HepG2 (cell line): ENCODE measurements at regions of chr20 and their contacts with region 1.

Region 1: GRCh38 chr20:51385646-51386530 is 156.6 kb downstream of the NFATC2 start:
- DNase-seq: peak; percentile 53
- ATAC-seq: peak; percentile 80
- H3K4me3 ChIP-seq: no peak overlapping the region
- H3K27ac ChIP-seq: no peak overlapping the region
- H3K4me1 ChIP-seq: no peaks in the 10 kb centered on the region
- H3K27me3 ChIP-seq: no peaks in the 10 kb centered on the region
- CTCF ChIP-seq: peak; percentile 68
- EP300 ChIP-seq: no peak
- POLR2A ChIP-seq: no peak
- RAD21 ChIP-seq: peak; percentile 83

Region 2: DNA sequence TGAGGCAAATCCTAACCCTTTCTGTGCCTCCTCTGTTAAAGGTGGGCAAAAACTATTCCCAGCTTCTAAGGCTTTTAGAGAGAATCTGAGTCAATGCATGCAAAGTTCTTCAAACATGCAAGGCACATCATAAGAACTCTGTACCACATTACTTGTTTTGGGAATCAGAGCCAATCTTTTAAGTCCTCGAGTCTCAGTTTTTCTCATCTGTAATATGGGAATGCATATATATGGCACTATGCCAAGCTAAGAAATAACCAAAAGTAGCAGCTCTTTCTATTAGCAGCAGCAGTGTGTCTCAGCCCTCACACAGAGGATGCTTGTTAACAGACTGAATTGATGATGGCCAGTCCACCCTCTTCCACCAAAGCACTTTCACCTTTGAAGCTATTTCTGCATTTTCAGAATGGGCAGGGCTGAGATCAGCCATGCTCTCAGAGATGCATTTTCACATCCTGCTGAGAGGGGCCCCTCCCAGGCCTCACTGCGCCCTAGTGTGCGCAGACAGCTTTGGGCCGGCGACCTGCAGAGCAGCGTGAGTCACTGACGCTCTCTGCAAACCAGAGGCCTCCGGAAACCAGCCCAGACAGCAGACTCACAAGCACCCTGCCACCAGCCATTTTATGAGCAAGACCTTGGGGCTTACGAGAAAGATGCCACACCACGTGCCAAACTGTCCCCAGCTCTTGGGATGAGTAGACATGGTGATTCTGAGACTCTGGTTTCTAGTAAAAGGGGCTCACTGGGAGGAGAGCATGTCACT is 18.6 kb after region 1 on chr20:
- CTCF ChIA-PET with region 1: no interaction called
- POLR2A ChIA-PET with region 1: no interaction called
- in situ Hi-C with region 1: no loop called
- intact Hi-C with region 1: no loop called
- DNase-seq: no peak
- ATAC-seq: no peak
- H3K4me3 ChIP-seq: no peak overlapping the region
- H3K27ac ChIP-seq: no peak overlapping the region
- H3K4me1 ChIP-seq: no peaks in the 10 kb centered on the region
- H3K27me3 ChIP-seq: no peaks in the 10 kb centered on the region
- CTCF ChIP-seq: no peak
- EP300 ChIP-seq: no peak
- POLR2A ChIP-seq: no peak
- RAD21 ChIP-seq: no peak

Region 3: DNA sequence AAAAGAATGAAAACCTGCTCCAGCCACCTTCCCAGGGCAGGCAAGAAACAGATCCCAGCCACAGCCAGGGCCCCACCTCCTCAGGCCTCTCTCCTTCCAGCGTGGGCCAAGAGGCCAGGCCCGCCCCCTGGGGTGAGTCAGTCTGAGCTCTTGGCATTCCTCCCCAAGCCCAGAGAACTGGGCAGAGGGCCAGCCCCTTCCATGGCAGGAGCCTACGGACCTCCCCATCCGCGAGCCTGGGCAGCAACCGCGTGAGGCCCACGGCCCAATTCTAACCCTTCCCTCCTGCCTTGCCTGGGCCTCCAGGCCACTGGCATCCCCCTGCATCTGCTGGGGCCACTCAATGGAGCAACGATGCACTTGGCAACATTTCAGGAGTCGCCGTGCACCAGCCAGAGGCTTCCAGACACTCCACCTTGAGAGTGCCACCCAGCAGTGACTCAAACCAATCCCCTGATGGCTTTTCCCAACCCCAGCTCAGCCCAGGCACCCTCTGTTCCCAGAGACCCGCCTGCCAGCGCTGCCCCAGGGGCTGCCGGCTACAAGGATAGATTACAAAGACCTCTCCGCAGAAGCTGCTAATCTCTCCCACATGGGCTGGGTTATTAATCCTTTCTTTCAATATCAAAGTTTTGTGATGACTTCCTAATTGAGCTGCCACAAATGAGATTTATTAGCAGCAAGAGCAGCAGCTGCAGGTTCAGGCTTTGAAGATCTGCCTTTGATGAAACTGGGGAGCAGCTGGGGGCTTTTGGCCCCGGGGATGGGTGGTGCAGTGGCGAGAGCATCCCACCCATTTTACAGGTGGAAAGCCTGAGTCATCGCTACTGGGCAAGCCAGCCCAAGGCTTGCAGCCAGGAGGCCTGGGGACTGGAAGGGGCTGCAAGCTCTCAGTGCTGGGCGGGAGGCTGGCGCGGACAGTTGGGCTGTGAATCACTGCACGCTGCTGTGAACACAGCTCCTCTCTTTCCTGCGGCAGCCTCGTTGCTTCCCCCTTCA is 70.9 kb after region 1 on chr20:
- CTCF ChIA-PET with region 1: no interaction called
- POLR2A ChIA-PET with region 1: no interaction called
- in situ Hi-C with region 1: no loop called
- intact Hi-C with region 1: loop called (anchors 10 kb)
- DNase-seq: peak; percentile 78
- ATAC-seq: peak; percentile 92
- H3K4me3 ChIP-seq: peak overlapping the region in 1 of 3 experiments; percentile 23; a peak in 2 of 6 replicates
- H3K27ac ChIP-seq: no peak overlapping the region
- H3K4me1 ChIP-seq: peaks cover 10% of the 10 kb centered on the region
- H3K27me3 ChIP-seq: no peaks in the 10 kb centered on the region
- CTCF ChIP-seq: no peak
- EP300 ChIP-seq: no peak
- POLR2A ChIP-seq: no peak
- RAD21 ChIP-seq: no peak

Region 4: GRCh38 chr20:51595058-51595532 is 209.2 kb after region 1 on chr20:
- CTCF ChIA-PET with region 1: interaction called, 25 read pairs
- POLR2A ChIA-PET with region 1: no interaction called
- in situ Hi-C with region 1: no loop called
- intact Hi-C with region 1: loop called (anchors 1 kb)
- DNase-seq: peak; percentile 88
- ATAC-seq: peak; percentile 98
- H3K4me3 ChIP-seq: no peak overlapping the region
- H3K27ac ChIP-seq: no peak overlapping the region
- H3K4me1 ChIP-seq: peaks cover 13% of the 10 kb centered on the region
- H3K27me3 ChIP-seq: no peaks in the 10 kb centered on the region
- CTCF ChIP-seq: peak; percentile 99
- EP300 ChIP-seq: no peak
- POLR2A ChIP-seq: no peak
- RAD21 ChIP-seq: peak; percentile 98